ENCODE measurements at regions of chr9 and their contacts with region 1.

Region 1: GRCh38 chr9:19174127-19174912 is 47.0 kb upstream of the PLIN2 start:
- DNase-seq: peak; percentile 73
- H3K4me3 ChIP-seq: no peak overlapping the region
- H3K27ac ChIP-seq: no peak overlapping the region
- H3K4me1 ChIP-seq: no peaks in the 10 kb centered on the region
- H3K27me3 ChIP-seq: no peaks in the 10 kb centered on the region
- CTCF ChIP-seq: peak; percentile 43; the same call in 1 of the 2 replicates

Region 2: GRCh38 chr9:18720691-18721090 is 453.6 kb before region 1 on chr9:
- CTCF ChIA-PET with region 1: no interaction called
- POLR2A ChIA-PET with region 1: no interaction called
- intact Hi-C with region 1: no loop called
- DNase-seq: no peak
- H3K4me3 ChIP-seq: no peak overlapping the region
- H3K27ac ChIP-seq: no peak overlapping the region
- H3K4me1 ChIP-seq: no peaks in the 10 kb centered on the region
- H3K27me3 ChIP-seq: no peaks in the 10 kb centered on the region
- CTCF ChIP-seq: no peak

Region 3: DNA sequence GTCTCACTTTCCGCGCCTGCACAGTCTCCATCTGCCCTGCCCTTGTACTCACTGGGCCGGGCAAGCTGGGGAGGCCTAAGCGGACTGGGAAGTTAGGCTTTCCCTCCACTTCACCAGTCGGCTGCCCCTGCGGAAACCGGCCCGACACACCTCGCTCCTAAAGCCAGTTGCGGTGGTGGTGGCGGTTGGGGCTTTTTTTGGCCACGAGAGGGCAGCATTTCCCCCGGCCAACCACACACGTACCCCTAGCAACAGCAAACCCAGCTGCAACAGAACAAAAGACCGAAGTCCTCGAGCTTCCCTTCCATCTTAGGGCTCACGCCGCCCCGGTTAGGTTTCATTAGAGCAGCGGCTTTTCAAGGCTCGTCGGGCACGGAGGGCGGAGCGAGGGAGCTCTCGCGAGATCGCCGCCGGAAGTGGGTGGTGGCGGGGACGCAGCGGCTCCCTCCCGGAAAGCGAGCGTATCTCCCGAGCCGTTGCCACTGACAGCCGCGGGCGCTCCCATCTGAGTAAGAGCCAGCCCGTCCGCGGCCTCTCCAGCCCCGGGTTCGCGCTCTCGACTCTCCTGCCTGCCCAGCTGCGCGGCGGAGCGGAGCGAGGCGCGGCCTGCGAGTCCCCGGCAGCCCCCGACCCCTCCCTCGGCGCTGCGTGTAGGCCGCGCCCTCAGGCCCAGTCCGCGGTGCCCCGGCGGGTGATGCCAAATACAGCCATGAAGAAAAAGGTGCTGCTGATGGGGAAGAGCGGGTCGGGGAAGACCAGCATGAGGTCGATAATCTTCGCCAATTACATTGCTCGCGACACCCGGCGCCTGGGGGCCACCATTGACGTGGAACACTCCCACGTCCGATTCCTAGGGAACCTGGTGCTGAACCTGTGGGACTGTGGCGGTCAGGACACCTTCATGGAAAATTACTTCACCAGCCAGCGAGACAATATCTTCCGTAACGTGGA is 125.1 kb before region 1 on chr9 and contains the start of gene RRAGA:
- CTCF ChIA-PET with region 1: interaction called, 11 read pairs
- POLR2A ChIA-PET with region 1: no interaction called
- intact Hi-C with region 1: loop called (anchors 2 kb)
- DNase-seq: peak; percentile 92
- H3K4me3 ChIP-seq: peak within 1 kb of the TSS; percentile 71
- H3K27ac ChIP-seq: peak within 1 kb of the TSS; percentile 89
- H3K4me1 ChIP-seq: no peaks in the 10 kb centered on the region
- H3K27me3 ChIP-seq: no peaks in the 10 kb centered on the region
- CTCF ChIP-seq: peak; percentile 66
- total RNA-seq, gene RRAGA: 33.0 and 34.9 TPM in 2 replicates

Region 4: GRCh38 chr9:19085295-19085694 is 89.0 kb before region 1 on chr9:
- CTCF ChIA-PET with region 1: no interaction called
- POLR2A ChIA-PET with region 1: no interaction called
- intact Hi-C with region 1: loop called (anchors 5 kb)
- DNase-seq: peak; percentile 6
- H3K4me3 ChIP-seq: no peak overlapping the region
- H3K27ac ChIP-seq: no peak overlapping the region
- H3K4me1 ChIP-seq: no peaks in the 10 kb centered on the region
- H3K27me3 ChIP-seq: no peaks in the 10 kb centered on the region
- CTCF ChIP-seq: peak; percentile 38

Measured in A673 (cell line).